Head of caudate nucleus (tissue), 42 donors: ENCODE measurements at regions of chr7 and their contacts with region 1.

Region 1: GRCh38 chr7:65960351-65961074 is 21.5 kb downstream of the GUSB start:
- DNase-seq: no peak

Region 2: DNA sequence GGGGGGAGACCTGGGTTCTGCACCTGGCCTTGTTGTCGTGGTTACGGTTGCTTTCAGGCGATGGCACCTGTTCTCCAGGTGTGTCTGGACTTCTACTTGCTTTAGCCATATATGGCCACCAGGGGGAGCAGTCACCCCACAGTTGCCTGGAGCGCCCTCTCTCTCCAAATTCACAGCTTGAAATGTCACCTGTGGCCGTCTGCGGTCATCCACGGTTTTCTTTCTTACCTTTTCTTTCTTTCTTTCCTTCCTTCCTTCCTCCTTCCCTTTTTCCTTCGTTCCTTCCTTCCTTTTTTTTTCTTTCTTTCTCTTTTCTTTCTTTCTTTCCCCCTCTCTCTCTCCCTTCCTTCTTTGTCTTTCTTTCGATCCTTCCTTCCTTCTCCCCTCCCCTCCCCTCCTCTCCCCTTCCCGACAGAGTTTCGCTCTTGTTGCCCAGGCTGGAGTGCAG is 238.1 kb before region 1 on chr7:
- intact Hi-C with region 1: no loop called
- DNase-seq: peak in 40 of 42 donors; percentile 9 to 80 (median 50)

Region 3: GRCh38 chr7:65746398-65746669 is 214.2 kb before region 1 on chr7:
- intact Hi-C with region 1: loop called (anchors 10 kb)
- DNase-seq: no peak